ENCODE measurements at regions of chr16 and their contacts with region 1.

Region 1: DNA sequence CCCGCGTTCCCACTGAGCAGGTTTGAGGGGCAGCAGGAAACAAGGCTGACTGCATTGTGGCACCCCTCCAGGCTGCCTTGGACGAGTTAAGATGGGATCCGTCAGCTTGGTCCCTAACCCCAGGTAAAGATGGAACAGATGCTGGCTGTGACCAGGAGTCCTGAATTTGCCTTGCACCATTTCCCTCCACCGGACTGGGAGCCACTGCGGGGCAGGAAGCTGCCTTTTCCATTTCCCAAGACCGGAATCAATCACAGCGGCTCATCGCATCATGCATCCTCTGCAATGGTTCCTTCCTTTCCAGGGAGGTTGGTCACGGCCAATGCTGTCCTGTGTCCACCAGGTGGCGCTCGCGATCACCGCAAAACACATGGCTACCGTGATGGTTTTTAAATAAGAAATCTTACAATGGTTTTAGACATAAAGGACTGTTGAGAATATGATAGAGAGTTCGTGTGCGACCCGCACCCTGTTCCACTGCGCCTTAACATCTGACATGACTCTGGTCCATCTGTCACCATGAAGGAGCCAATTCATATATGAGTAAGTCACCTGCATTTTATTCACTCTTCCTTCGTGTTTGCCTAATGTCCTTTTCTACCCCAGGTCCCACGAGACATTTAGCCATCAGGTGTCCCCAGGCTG is 6.8 kb upstream of the MEAK7 start:
- DNase-seq: peak; percentile 79
- H3K4me3 Mint-ChIP-seq: no peak overlapping the region
- H3K27ac Mint-ChIP-seq: peak overlapping the region; percentile 99
- H3K4me1 Mint-ChIP-seq: peaks cover 81% of the 10 kb centered on the region
- H3K27me3 Mint-ChIP-seq: peaks cover 2% of the 10 kb centered on the region

Region 2: GRCh38 chr16:84462261-84463210 is 48.8 kb before region 1 on chr16:
- CTCF ChIA-PET with region 1: no interaction called
- POLR2A ChIA-PET with region 1: no interaction called
- DNase-seq: no peak
- H3K4me3 Mint-ChIP-seq: no peak overlapping the region
- H3K27ac Mint-ChIP-seq: no peak overlapping the region
- H3K4me1 Mint-ChIP-seq: peaks cover 6% of the 10 kb centered on the region
- H3K27me3 Mint-ChIP-seq: no peaks in the 10 kb centered on the region

Region 3: DNA sequence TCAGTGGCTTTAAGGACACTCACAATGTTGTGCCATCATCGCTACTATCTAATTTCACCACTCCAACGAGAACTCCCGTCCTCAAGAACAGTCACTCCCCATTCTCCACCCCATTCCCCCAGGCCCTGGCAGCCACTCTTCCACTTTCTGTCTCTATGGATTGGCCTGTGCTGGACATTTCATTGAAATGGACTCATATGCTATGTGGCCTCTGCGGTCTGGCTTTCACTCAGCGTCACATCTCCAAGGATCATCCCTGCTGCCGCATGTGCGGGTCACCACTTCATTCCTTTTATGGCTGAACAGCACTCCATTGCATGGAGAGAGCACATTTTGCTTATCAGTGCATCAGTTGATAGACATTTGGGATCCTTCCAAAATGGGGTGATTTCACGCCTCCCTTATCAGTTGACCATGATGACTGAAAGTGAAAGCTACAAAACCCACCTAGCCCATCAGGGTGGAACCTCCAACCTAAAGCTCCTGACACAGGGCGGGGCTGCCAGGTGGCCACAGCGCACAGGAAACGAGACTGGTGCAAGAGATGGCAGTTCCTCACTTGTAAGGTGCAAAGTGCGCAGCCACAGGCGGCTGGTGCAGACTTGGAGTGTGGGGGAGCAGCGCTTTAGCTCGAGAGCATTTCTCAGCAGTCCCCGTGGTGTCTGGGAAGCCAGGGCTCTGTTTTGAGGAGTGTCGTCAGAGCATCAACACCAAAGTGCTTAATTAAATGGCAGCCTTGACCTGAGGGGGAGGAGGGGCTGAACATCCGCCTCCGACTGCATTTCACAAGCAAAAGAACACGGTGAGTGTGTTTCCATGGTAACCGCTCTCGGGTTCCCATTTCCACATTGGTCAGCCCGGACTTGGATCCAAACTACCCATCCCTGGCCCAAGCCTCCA is 82.8 kb after region 1 on chr16:
- CTCF ChIA-PET with region 1: interaction called, 7 read pairs
- POLR2A ChIA-PET with region 1: interaction called, 120 read pairs
- DNase-seq: peak; percentile 91
- H3K4me3 Mint-ChIP-seq: peak overlapping the region; percentile 81
- H3K27ac Mint-ChIP-seq: peak overlapping the region; percentile 96
- H3K4me1 Mint-ChIP-seq: peaks cover 82% of the 10 kb centered on the region
- H3K27me3 Mint-ChIP-seq: no peaks in the 10 kb centered on the region

Region 4: DNA sequence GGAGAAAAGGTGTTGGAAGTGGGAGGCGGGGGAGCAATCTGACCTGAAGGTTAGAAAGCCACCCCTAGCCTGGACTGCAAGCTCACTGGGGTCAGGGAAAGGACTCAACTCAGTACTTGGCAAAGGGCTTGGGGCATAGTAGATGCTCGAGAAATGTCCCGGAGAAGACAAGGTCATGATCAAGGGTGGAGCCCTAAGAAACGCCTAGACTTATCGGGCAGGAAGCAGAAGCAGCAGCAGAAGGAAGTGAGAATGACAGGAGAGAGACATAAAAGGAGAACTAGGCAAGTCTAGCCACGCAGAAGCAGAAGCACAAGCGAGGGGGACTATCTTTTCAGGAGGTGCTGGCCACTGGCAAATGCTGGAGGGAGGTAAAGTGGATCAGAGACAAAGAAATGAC is 96.4 kb after region 1 on chr16:
- CTCF ChIA-PET with region 1: interaction called, 8 read pairs
- POLR2A ChIA-PET with region 1: interaction called, 120 read pairs
- DNase-seq: peak; percentile 51
- H3K4me3 Mint-ChIP-seq: peak overlapping the region; percentile 70
- H3K27ac Mint-ChIP-seq: peak overlapping the region; percentile 92
- H3K4me1 Mint-ChIP-seq: peaks cover 94% of the 10 kb centered on the region
- H3K27me3 Mint-ChIP-seq: no peaks in the 10 kb centered on the region

Measured in activated CD4-positive, alpha-beta memory T cell treated with anti-CD3 and anti-CD28 coated beads, Interleukin-2, amount 10 ng/mL, durations not matched to agents 7 days and 5 days (primary cell).